ENCODE measurements at regions of chr2 and their contacts with region 1.

Region 1: GRCh38 chr2:64779117-64779690 is 125.5 kb upstream of the SERTAD2 start:
- DNase-seq: peak; percentile 71 to 99
- H3K4me3 ChIP-seq: no peak overlapping the region
- H3K27ac ChIP-seq: peak overlapping the region; percentile 60
- H3K4me1 ChIP-seq: peaks cover 62% of the 10 kb centered on the region
- H3K27me3 ChIP-seq: no peaks in the 10 kb centered on the region
- CTCF ChIP-seq: no peak

Region 2: DNA sequence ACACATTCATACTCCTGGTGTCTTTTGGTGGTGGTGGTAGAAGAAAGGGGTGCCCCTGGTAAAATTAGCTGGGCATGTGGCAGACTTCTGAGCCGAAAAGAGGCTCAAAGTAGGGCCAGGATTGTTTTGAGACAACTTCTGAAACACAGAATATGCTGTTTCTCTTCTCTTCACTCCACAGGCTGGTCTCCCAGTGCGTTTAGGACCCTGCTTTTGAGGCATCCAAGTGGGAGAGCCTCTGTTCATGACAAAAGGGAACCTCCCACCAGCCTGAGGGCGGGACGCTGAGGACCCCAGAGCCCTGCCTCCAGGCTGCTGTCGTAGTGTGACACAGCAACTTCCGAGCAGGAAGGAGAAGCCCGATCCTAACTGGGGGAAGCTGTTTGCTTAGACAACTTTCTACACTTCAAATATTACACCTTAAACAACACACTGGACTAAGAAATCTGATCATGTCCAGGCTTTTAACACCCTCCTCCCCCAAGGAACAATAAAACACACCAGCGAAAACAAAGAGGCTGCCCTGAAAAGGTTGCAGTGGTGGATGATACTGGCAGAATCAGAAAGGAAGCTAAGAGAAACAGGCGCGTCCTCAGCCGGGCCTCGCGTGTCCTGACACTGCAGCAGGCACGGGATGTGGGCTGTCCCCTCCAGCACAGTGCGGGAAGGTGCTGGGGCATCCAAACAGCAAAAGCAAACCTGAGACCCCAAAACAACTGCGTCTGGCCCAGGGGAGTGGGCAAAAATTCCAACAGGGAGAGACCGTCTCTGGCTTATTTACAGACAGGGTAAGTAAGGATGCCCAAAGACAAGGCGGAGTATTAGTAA is 134.8 kb before region 1 on chr2:
- CTCF ChIA-PET with region 1: no interaction called
- POLR2A ChIA-PET with region 1: interaction called, 5 read pairs
- intact Hi-C with region 1: loop called (anchors 1 kb)
- DNase-seq: peak; percentile 83 to 85
- H3K4me3 ChIP-seq: peak overlapping the region; percentile 60
- H3K27ac ChIP-seq: peak overlapping the region; percentile 97
- H3K4me1 ChIP-seq: peaks cover 78% of the 10 kb centered on the region
- H3K27me3 ChIP-seq: no peaks in the 10 kb centered on the region
- CTCF ChIP-seq: no peak

Region 3: DNA sequence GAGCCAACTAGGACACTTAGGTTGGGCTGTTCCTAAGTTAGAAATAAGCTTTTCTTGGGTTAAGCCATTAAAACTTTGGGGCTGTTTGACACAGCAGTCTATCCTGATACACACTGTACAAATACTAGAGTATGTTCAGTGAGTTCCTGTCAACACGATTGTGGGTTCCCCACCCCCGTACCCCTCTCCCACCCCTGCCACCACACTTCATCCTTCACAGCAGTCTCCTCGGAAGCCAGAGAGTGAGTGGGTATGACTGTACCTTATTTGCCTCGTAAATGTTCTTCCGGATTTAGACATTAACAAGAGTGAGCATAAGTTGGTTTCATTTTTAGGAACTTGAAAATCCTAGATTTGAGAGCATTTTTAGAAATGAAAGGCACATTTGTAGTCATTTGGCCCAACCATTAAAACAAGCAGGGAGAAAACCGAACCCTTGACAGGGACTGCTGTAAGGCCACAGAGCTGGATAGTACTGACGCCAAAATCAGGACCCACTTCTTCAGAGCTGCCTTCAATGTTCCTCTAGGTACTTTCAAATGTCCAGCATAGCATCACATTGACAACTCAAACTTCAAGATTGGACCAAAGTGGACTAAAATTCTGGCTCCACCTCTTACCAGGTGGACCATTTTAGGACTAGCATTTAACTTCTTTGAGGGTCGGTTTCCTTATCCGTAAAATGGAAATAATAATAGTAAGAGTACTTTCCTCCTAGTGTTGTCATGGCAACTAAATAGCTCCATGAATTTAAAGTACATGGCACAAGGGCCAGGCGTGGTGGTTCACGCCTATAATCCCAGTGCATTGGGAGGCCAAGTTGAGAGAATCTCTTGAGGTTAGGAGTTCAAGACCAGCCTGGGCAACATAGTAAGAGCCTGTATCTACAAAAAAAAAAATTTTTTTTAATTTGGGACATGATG is 40.8 kb after region 1 on chr2:
- CTCF ChIA-PET with region 1: interaction called, 10 read pairs
- POLR2A ChIA-PET with region 1: no interaction called
- intact Hi-C with region 1: no loop called
- DNase-seq: no peak
- H3K4me3 ChIP-seq: no peak overlapping the region
- H3K27ac ChIP-seq: no peak overlapping the region
- H3K4me1 ChIP-seq: peaks cover 43% of the 10 kb centered on the region
- H3K27me3 ChIP-seq: no peaks in the 10 kb centered on the region
- CTCF ChIP-seq: no peak

Measured in PC-9 (cell line).